ENCODE measurements at regions of chr3 and their contacts with region 1.

Region 1: GRCh38 chr3:140972833-140973232 is 31.2 kb downstream of the SLC25A36 start:
- DNase-seq: no peak
- H3K4me3 ChIP-seq: no peak overlapping the region
- CTCF ChIP-seq: peak; percentile 9

Region 2: DNA sequence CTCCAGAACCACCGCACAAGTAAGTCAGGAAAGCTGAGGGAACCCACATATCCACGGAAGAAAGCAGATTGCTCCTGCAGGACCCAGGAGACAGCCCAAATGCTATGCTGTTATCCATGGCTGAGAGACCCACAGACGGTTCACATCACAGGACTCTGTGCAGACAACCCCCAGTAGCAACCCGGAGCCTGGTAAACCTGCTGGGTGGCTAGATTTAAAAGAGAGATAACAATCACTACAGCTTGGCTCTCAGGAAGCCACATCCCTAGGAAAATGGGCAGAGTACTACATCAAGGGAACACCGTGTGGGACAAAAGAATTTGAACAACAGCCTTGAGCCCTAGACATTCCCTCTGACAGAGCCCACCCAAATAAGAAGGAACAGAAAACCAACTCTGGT is 308.7 kb before region 1 on chr3:
- CTCF ChIA-PET with region 1: no interaction called
- POLR2A ChIA-PET with region 1: no interaction called
- DNase-seq: no peak
- H3K4me3 ChIP-seq: no peak overlapping the region
- CTCF ChIP-seq: no peak

Region 3: GRCh38 chr3:140898340-140899180 is 74.3 kb before region 1 on chr3:
- CTCF ChIA-PET with region 1: interaction called, 14 read pairs
- POLR2A ChIA-PET with region 1: no interaction called
- DNase-seq: peak; percentile 65
- H3K4me3 ChIP-seq: no peak overlapping the region
- CTCF ChIP-seq: peak; percentile 64

Region 4: DNA sequence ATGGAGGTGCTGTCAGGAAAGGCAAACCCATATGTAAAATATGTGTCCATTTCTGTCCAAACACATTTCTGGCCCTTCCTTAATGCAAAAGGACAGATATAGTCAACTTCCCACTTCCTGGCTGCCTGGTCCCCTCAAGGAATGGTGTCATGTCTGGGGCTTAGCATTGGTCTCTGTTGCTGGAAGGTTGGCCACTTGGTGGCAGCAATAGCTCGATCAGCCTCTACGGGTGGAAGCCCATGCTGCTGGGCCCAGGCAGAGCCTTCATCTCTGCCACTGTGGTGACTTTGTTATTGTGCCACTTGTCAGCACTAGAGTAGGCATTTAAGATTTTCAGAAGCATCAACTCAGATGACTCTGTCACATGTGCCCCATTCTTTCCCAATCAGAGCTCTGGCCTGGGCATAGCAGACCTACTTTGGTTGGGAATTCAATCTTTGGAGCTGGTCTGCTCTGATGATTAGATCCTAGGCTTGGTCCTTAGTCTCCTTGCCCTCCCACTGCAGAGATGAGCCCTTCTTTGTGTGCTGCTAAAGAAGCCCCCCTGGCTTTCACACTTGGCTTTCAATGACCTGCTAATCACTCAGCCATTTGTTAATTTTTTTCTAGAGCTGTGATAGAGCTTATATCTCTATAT is 27.3 kb after region 1 on chr3:
- CTCF ChIA-PET with region 1: interaction called, 12 read pairs
- POLR2A ChIA-PET with region 1: no interaction called
- DNase-seq: no peak
- H3K4me3 ChIP-seq: no peak overlapping the region
- CTCF ChIP-seq: peak; percentile 69

Measured in AG04449 (cell line).